GM13977 (cell line): ENCODE measurements at regions of chr15 and their contacts with region 1.

Region 1: GRCh38 chr15:72141171-72142084 is 23.2 kb downstream of the SENP8 start:
- DNase-seq: peak; percentile 83
- CTCF ChIP-seq: no peak

Region 2: DNA sequence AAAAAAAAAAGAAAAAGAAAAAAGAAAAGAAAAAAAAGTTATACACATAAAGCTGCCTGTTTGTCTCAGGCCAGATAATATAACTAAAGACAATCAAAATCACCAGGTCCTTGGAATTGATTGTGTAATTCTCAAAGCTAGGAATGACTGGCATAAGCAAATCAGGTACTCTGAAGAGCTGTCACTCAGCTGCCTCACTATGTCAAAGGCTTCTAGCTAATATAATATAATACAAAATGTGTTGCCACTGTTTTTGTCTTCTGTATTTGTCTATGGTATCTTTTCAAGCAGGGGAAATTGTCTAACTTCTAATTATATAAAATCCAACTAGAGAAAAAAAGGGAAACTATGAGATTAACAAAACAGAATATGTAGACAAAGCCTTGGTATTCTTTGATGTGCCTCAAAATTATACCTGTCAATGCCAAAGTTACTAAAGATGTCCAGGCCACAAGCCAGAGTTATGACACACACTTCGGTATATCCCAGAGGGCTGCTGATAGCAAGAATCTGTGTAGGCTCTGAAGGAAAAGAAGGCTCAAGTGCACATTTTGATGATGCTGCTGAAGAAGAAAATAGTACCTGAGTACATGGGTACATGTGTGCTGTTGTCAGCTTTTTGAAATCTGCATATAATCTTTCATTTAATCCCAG is 368.1 kb before region 1 on chr15:
- in situ Hi-C with region 1: no loop called
- DNase-seq: no peak
- CTCF ChIP-seq: no peak

Region 3: DNA sequence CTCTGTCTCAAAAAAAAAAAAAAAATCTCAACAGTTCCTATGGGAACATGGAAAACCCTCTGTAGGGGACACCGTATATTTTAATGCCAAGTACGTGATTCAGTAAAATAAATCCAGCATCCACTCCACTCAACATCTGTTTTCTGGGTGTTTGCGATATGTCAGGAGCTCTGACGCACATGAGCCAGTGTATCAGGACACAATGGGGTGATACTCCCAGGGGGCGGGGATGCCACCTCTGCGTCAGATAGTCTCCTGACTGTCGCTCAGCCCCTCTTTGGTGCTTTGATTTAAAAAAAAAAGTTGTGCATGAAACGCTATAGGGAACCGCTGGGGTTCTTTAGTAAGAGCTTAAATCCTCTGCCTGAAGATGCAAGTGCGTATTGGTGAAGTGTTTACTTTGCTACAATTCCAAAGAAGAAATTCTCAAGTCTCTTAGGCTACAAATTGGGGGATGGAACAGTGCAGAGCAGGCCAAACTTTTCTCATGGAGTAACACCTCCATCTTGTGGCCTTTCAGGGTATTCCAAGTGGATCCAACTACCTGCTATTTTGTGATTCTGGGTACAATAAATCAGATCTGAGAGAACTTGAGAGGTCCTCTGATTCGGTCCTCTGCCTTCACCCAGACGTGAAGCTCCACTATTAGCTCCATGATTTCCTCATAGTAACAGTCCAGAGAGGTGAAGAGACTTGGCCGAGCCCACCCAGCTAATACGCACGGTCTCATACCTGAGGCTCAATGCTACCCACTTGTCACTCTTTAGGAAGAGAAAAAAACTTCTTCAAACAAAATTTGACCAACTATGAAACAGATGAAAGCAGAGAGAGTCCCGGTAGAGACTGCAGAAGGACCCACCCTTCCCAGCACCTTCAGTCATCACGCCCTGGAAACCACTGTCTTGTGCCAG is 340.3 kb before region 1 on chr15:
- in situ Hi-C with region 1: loop called (anchors 10 kb)
- DNase-seq: peak; percentile 70
- CTCF ChIP-seq: peak; percentile 78